GM12878 (cell line): ENCODE measurements at regions of chr22 and their contacts with region 1.

Region 1: GRCh38 chr22:29375398-29376076 is 12.8 kb downstream of the AP1B1 start:
- DNase-seq: no peak
- ATAC-seq: no peak
- H3K4me3 ChIP-seq: no peak overlapping the region
- H3K27ac ChIP-seq: no peak overlapping the region
- H3K4me1 ChIP-seq: no peaks in the 10 kb centered on the region
- H3K27me3 ChIP-seq: no peaks in the 10 kb centered on the region
- CTCF ChIP-seq: no peak
- EP300 ChIP-seq: no peak
- POLR2A ChIP-seq: no peak
- RAD21 ChIP-seq: no peak

Region 2: GRCh38 chr22:29387921-29388758 is 12.6 kb after region 1 on chr22 and contains the start of gene AP1B1:
- CTCF ChIA-PET with region 1: interaction called, 3 read pairs
- POLR2A ChIA-PET with region 1: interaction called, 11 read pairs
- RAD21 ChIA-PET with region 1: no interaction called
- SMC1A ChIA-PET with region 1: interaction called, 8 read pairs
- in situ Hi-C with region 1: no loop called
- intact Hi-C with region 1: no loop called
- DNase-seq: peak; percentile 69
- ATAC-seq: peak; percentile 90
- H3K4me3 ChIP-seq: peak within 1 kb of the TSS; percentile 92
- H3K27ac ChIP-seq: peak within 1 kb of the TSS; percentile 78
- H3K4me1 ChIP-seq: peaks cover 38% of the 10 kb centered on the region
- H3K27me3 ChIP-seq: no peaks in the 10 kb centered on the region
- CTCF ChIP-seq: no peak
- EP300 ChIP-seq: no peak
- POLR2A ChIP-seq: peak; percentile 93
- RAD21 ChIP-seq: no peak
- polyA plus RNA-seq, gene AP1B1: 2.1 to 5.0 TPM

Region 3: DNA sequence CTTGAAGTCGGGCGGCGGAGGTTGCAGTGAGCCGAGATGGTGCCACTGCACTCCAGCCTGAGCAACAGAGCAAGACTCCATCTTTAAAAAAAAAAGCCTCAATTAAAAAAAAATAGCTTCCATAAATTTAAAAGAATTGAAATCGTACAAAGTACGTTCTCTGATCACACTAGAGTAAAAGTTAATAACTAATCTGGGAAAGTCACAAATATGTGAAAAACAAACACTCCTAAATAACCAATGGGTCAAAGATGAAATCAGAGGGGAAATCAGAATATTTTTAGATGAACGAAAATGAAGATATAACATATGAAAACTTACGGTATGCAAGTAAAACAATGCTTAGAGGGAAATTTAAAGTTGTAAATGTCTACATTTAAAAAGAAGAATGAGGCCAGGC is 124.3 kb after region 1 on chr22:
- CTCF ChIA-PET with region 1: no interaction called
- POLR2A ChIA-PET with region 1: no interaction called
- RAD21 ChIA-PET with region 1: no interaction called
- SMC1A ChIA-PET with region 1: no interaction called
- in situ Hi-C with region 1: no loop called
- intact Hi-C with region 1: no loop called
- DNase-seq: no peak
- ATAC-seq: no peak
- H3K4me3 ChIP-seq: no peak overlapping the region
- H3K27ac ChIP-seq: no peak overlapping the region
- H3K4me1 ChIP-seq: no peaks in the 10 kb centered on the region
- H3K27me3 ChIP-seq: no peaks in the 10 kb centered on the region
- CTCF ChIP-seq: no peak
- EP300 ChIP-seq: no peak
- POLR2A ChIP-seq: no peak
- RAD21 ChIP-seq: no peak